Spleen (tissue), 13 donors: ENCODE measurements at regions of chr22 and their contacts with region 1.

Region 1: GRCh38 chr22:27063406-27063805 is 406.0 kb downstream of the MIAT start:
- DNase-seq: no peak
- H3K4me3 ChIP-seq: no peak overlapping the region
- H3K27ac ChIP-seq: no peak overlapping the region
- H3K4me1 ChIP-seq: no peaks in the 10 kb centered on the region
- H3K27me3 ChIP-seq: peaks cover 0 to 80% (median 0%) of the 10 kb centered on the region in 7 donors
- CTCF ChIP-seq: no peak
- POLR2A ChIP-seq: no peak

Region 2: DNA sequence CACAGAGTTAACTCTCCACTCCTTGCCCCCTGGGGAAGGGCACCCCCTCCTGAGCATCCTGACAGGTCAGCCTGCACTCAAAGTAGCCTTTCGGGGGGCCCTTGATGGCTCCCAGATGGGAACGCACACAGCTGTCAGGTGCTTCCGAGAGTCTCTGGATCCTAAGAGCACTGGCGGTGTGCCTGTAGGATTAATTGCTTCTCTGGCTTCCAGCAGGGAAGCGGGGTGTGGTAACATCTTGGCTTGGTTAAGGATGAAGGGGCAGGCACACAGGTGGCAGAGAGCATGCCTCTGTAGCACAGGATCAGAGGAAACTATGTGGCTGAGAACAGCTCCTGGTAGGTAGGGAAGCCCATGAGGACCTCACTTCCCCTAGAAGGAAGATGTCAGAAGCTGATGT is 206.2 kb before region 1 on chr22:
- intact Hi-C with region 1: no loop called
- DNase-seq: no peak
- H3K4me3 ChIP-seq: no peak overlapping the region
- H3K27ac ChIP-seq: no peak overlapping the region
- H3K4me1 ChIP-seq: no peaks in the 10 kb centered on the region
- H3K27me3 ChIP-seq: no peaks in the 10 kb centered on the region
- CTCF ChIP-seq: no peak
- POLR2A ChIP-seq: no peak

Region 3: DNA sequence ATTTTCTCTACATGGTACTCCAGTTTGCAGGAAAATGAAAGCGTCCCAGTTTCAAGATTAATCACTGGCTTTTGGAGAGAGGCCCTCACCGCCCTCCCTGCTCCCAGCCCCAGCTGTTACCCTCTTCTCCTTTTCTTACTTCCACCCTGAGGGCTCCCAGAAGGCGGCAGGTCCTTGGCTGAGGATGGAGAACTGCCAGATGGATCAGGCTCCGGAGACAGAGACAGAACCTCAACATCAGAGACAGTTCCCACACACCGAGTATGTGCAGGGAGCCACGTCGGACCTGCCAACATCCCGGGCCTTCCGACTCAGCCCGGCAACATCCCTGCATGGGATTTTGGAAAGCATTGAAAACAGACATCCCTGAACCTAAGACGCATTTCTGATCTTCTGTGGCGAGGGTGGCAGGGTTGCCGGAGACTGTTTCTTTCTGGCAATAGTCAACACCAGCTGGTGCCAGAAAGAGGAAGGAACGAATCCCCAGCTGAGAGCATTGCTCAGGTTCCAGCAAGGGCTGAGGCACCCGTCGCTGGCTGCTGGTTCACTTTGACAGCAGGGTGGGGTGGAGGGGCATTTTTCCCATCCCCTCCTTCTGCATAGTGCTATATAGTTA is 61.1 kb after region 1 on chr22:
- intact Hi-C with region 1: loop called (anchors 10 kb)
- DNase-seq: no peak
- H3K4me3 ChIP-seq: no peak overlapping the region
- H3K27ac ChIP-seq: peak overlapping the region in 2 of 8 donors; percentile 3 to 52
- H3K4me1 ChIP-seq: peaks cover 0 to 8% (median 0%) of the 10 kb centered on the region in 6 donors
- H3K27me3 ChIP-seq: peaks cover 0 to 29% (median 0%) of the 10 kb centered on the region in 7 donors
- CTCF ChIP-seq: no peak
- POLR2A ChIP-seq: no peak

Region 4: DNA sequence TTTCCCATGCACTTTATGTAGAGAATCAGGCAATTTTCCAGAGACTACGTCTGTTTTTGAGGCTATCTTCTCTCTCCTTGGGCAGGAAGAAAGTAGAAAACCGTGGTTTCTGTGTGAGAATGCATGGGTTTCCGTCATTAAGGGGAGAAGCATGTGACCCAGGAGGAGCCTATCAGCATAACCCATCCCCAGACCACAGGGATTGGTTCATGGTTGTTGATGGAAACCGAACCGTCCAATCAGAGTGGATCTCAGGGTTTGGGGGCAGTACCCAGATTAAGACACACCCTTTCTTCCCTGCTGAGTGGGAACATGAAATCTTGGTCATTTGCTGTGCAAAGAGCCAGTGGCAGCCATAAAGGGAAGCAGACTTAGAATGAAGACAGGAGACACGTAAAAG is 220.3 kb after region 1 on chr22:
- intact Hi-C with region 1: no loop called
- DNase-seq: no peak
- H3K4me3 ChIP-seq: no peak overlapping the region
- H3K27ac ChIP-seq: no peak overlapping the region
- H3K4me1 ChIP-seq: no peaks in the 10 kb centered on the region
- H3K27me3 ChIP-seq: peaks cover 0 to 6% (median 0%) of the 10 kb centered on the region in 7 donors
- CTCF ChIP-seq: no peak
- POLR2A ChIP-seq: no peak

Region 5: GRCh38 chr22:27627444-27627833 is 564.0 kb after region 1 on chr22:
- intact Hi-C with region 1: no loop called
- DNase-seq: no peak
- H3K4me3 ChIP-seq: no peak overlapping the region
- H3K27ac ChIP-seq: no peak overlapping the region
- H3K4me1 ChIP-seq: no peaks in the 10 kb centered on the region
- H3K27me3 ChIP-seq: peaks cover 0 to 16% (median 0%) of the 10 kb centered on the region in 7 donors
- CTCF ChIP-seq: no peak
- POLR2A ChIP-seq: no peak